Mammary epithelial cell (primary cell): ENCODE measurements at regions of chr10 and their contacts with region 1.

Region 1: GRCh38 chr10:96450529-96451207 is 63.1 kb downstream of the TLL2 start:
- DNase-seq: no peak
- H3K4me3 ChIP-seq: no peak overlapping the region
- H3K27ac ChIP-seq: no peak overlapping the region
- H3K4me1 ChIP-seq: no peaks in the 10 kb centered on the region
- H3K27me3 ChIP-seq: no peaks in the 10 kb centered on the region
- CTCF ChIP-seq: no peak

Region 2: DNA sequence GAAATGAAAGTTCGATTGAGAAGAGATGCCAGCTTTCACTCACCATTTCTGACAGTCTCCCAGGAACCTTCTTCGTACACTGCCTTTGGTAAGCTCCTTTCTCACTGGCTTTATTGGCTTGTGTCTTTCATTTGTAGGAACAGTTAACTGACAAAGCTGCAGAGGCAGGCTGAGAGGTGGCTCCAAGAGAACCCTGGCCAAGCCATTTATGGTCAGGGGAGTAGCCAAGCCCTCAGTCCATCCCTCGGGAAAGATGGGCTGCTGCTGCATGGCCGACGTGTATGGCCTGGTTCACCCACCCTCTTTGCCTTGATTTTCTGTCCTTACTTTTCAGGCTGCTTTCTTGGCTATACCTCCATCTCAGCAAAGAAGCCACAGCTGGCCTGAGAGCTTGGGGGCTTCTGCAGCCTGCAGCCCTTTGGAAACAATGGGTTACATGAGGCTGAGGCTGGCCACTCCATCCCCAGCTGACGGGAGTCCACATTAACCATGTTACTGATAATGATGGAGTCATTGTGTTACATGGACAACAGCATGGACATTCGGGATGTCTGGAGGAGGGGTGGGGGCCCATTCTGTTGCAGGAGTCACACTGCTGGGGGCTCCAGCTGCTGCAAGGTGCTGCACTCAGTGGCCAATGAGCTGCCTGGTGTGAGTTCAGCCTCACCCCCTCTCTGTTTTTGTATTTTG is 91.7 kb before region 1 on chr10 and contains the start of gene OPALIN:
- CTCF ChIA-PET with region 1: no interaction called
- dilution Hi-C with region 1: no loop called
- in situ Hi-C with region 1: no loop called
- intact Hi-C with region 1: loop called (anchors 10 kb)
- DNase-seq: no peak
- H3K4me3 ChIP-seq: no peak within 1 kb of the TSS
- H3K27ac ChIP-seq: no peak within 1 kb of the TSS
- H3K4me1 ChIP-seq: no peaks in the 10 kb centered on the region
- H3K27me3 ChIP-seq: no peaks in the 10 kb centered on the region
- CTCF ChIP-seq: no peak
- total RNA-seq, gene OPALIN: not detected